Activated CD8-positive, alpha-beta T cell treated with anti-CD3 and anti-CD28 coated beads, Interleukin-2, amount 10 ng/mL, durations not matched to agents 7 days and 5 days (primary cell): ENCODE measurements at regions of chr5 and their contacts with region 1.

Region 1: DNA sequence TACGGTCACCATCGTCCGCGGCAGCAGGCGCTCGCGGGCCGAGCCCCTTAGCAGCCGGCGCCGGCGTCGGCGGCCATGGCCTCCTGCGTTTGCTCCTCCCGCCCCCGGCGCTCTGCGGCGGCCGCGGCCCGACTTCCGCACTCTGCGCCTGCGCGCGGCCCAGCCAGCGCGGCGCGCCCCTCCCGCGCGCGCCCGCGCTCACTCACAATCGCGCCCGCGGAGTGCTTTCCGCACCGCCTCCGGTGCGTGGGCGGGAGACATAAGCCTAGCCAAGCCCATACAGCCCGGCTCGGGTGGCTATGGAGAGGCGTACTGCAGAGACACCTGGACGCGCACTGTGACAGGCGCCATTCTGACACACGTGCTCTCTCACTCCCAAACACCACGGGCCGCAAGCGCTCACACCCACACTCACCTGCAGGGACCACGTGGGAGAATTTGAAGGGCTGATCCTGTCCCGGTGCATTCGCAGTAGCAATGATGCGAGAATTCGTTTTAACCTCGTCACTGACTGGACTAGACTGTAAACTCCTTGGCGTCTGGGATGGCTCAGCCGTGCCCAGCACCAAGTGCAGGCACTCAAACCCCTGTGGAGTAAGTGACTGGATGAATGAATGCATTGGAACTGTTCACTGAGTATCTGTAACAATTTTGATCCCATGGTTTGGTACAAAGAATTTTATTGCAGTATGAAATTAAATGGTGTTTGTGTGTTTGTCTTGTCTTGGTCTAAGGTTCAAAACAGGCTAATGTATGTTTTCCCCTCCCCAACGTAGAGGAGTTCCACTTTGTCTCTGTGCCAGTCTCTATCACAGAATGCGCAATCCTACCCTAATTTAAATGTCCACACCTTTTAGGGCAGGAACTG is at the start of gene RNF145:
- DNase-seq: peak; percentile 85
- ATAC-seq: peak; percentile 80
- H3K4me3 Mint-ChIP-seq: peak within 1 kb of the TSS; percentile 93
- H3K27ac Mint-ChIP-seq: peak within 1 kb of the TSS; percentile 97
- H3K4me1 Mint-ChIP-seq: peaks cover 54% of the 10 kb centered on the region
- H3K27me3 Mint-ChIP-seq: no peaks in the 10 kb centered on the region
- total RNA-seq, gene RNF145: 140 to 143 TPM

Region 2: DNA sequence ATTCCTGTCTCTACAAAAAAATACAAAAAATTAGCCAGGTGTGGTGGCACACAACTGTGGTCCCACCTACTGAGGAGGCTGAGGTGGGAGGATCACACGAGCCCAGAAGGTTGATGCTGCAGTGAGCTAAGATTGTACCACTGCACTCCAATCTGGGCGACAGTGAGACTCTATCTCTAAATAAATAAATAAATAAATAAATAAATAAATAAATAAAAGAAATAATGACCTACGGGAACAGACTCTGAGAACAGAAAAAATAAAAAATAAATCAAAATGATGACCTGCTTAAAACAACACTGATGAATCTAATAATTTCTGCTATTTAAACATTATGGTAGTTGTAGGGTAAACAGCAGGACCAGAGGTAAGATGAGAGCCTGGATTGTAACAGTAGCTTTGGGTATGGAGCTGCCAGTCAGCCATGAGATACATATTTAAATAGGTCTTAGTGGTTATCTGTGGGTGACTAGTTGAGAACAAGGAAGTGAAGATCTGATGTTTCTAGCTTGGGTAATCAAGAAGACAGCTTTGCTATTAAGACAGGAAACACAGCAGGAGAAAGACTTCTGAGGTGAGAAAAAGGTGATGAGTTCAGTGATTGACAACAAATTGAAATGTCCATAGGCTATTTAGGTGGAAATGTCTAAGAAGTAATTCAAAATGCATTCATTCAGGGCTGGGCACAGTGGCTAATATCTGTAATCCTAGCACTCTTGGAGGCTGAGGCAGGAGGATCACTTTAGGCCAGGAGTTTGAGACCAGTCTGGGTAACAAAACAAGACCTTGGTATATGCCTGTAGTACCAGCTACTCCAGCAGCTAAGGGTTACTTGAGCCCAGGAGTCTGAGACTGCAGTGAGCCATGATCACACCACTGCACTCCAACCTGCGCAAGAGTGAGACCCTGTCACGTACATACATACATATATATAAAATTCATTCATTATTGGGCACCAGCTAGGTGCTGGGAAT is 11.3 kb before region 1 on chr5:
- CTCF ChIA-PET with region 1: interaction called, 9 read pairs
- POLR2A ChIA-PET with region 1: interaction called, 29 read pairs
- DNase-seq: no peak
- ATAC-seq: peak; percentile 88
- H3K4me3 Mint-ChIP-seq: no peak overlapping the region
- H3K27ac Mint-ChIP-seq: peak overlapping the region; percentile 56
- H3K4me1 Mint-ChIP-seq: peaks cover 54% of the 10 kb centered on the region
- H3K27me3 Mint-ChIP-seq: no peaks in the 10 kb centered on the region

Region 3: GRCh38 chr5:159262859-159263567 is 53.3 kb after region 1 on chr5 and contains the start of gene UBLCP1:
- CTCF ChIA-PET with region 1: interaction called, 4 read pairs
- POLR2A ChIA-PET with region 1: interaction called, 13 read pairs
- DNase-seq: peak; percentile 87
- ATAC-seq: peak; percentile 88
- H3K4me3 Mint-ChIP-seq: peak within 1 kb of the TSS; percentile 97
- H3K27ac Mint-ChIP-seq: peak within 1 kb of the TSS; percentile 98
- H3K4me1 Mint-ChIP-seq: peaks cover 29% of the 10 kb centered on the region
- H3K27me3 Mint-ChIP-seq: no peaks in the 10 kb centered on the region
- total RNA-seq, gene UBLCP1: 27.8 to 28.4 TPM

Region 4: GRCh38 chr5:159497221-159497620 is 287.5 kb after region 1 on chr5:
- CTCF ChIA-PET with region 1: no interaction called
- POLR2A ChIA-PET with region 1: no interaction called
- DNase-seq: no peak
- ATAC-seq: no peak
- H3K4me3 Mint-ChIP-seq: no peak overlapping the region
- H3K27ac Mint-ChIP-seq: no peak overlapping the region
- H3K4me1 Mint-ChIP-seq: no peaks in the 10 kb centered on the region
- H3K27me3 Mint-ChIP-seq: peaks cover 18% of the 10 kb centered on the region